ENCODE measurements at regions of chr1 and their contacts with region 1.

Region 1: DNA sequence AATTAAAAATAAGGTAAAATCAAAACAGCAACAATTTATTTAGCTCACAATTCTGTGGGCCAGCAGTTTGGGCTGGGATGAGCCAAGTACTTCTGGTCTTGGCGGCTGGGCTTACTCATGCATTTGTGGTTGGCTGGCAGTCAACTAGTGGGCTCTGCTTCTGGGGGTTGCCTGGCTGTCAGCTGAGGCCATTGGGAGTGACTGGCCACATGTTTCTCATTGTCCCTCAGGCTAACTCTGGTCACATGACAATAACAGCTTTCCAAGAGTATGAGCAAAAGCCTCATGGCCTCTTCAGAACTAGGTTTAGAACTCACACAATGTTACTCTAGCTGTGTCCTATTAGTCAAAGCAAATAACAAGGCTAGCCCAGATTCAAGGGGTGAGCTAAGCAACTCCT is 15.6 kb upstream of the CHIA start:
- DNase-seq: peak; percentile 63
- ATAC-seq: peak; percentile 74
- H3K4me3 Mint-ChIP-seq: no peak overlapping the region
- H3K27ac Mint-ChIP-seq: peak overlapping the region; percentile 51
- H3K4me1 Mint-ChIP-seq: peaks cover 39% of the 10 kb centered on the region
- H3K27me3 Mint-ChIP-seq: peaks cover 25% of the 10 kb centered on the region

Region 2: DNA sequence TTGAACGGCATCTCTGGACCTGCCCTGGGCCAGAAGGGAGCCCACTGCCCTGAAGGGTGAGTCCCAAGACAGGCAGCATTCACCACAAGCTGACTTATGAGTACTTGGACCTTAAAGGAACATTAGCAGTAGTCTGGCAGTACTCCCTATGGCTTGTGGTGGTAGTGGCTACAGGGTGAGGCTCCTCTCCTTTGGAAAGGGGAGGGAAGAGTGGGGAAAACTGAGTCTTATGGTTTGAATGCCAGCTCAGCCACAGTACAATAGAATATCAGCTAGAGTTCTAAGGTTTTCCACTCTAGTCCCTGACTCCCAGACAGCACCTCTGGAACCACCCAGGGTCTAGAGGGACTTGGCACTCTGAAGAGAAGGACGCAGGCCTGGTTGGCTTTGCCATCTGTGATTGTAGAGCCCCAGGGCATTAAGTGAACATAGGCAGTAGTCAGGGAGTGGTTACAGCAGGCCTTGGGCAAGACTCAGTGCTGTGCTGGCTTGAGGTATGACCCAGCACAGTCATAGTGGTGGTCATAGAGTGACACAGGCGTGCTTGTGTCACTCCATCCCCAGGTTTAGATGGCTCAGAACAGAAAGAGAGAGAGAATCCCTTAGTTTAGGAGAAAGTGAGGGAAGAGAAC is 371.1 kb before region 1 on chr1:
- CTCF ChIA-PET with region 1: no interaction called
- POLR2A ChIA-PET with region 1: no interaction called
- intact Hi-C with region 1: no loop called
- DNase-seq: peak; percentile 23
- ATAC-seq: peak; percentile 59
- H3K4me3 Mint-ChIP-seq: no peak overlapping the region
- H3K27ac Mint-ChIP-seq: no peak overlapping the region
- H3K4me1 Mint-ChIP-seq: peaks cover 10% of the 10 kb centered on the region
- H3K27me3 Mint-ChIP-seq: no peaks in the 10 kb centered on the region

Region 3: DNA sequence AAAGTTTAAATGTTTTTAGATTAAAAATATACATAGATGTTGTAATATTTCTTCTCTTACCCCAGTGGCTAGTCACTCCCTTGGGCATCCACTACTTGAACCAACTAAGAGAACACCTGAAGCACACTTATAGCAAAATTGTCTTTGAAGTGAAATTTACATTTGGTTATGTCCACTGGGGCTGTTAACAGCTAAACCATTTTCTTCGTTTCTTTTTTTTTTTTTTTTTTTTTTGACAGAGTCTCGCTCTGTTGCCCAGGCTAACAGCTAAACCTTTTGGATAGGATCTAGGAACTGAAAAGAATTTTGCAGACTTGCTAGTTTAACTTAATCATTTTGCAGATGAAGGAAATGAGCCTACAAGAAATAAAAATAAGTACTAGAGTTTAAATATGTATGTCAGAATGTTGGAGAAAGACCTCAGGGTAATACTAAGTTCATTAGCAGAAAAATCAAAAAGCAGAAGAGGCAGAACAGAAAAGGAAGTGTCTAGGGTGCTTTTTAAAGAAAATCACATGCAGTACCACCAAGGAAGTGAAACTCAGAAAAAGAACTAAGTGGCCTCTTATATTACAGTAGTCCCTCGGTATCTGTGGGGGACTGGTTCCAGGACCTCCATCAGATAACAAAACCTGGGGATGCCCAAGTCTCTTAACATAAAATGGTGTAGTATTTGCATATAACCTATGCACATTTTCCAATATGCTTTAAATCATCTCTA is 147.0 kb before region 1 on chr1:
- CTCF ChIA-PET with region 1: no interaction called
- POLR2A ChIA-PET with region 1: no interaction called
- intact Hi-C with region 1: no loop called
- DNase-seq: no peak
- ATAC-seq: no peak
- H3K4me3 Mint-ChIP-seq: no peak overlapping the region
- H3K27ac Mint-ChIP-seq: peak overlapping the region; percentile 10
- H3K4me1 Mint-ChIP-seq: peaks cover 27% of the 10 kb centered on the region
- H3K27me3 Mint-ChIP-seq: no peaks in the 10 kb centered on the region

Region 4: GRCh38 chr1:111176678-111177077 is 98.4 kb before region 1 on chr1:
- CTCF ChIA-PET with region 1: no interaction called
- POLR2A ChIA-PET with region 1: no interaction called
- intact Hi-C with region 1: no loop called
- DNase-seq: no peak
- ATAC-seq: no peak
- H3K4me3 Mint-ChIP-seq: no peak overlapping the region
- H3K27ac Mint-ChIP-seq: no peak overlapping the region
- H3K4me1 Mint-ChIP-seq: peaks cover 48% of the 10 kb centered on the region
- H3K27me3 Mint-ChIP-seq: no peaks in the 10 kb centered on the region

Region 5: GRCh38 chr1:111227851-111228747 is 47.0 kb before region 1 on chr1:
- CTCF ChIA-PET with region 1: interaction called, 4 read pairs
- POLR2A ChIA-PET with region 1: no interaction called
- intact Hi-C with region 1: loop called (anchors 2 kb)
- DNase-seq: no peak
- ATAC-seq: peak; percentile 55
- H3K4me3 Mint-ChIP-seq: no peak overlapping the region
- H3K27ac Mint-ChIP-seq: peak overlapping the region; percentile 30
- H3K4me1 Mint-ChIP-seq: peaks cover 86% of the 10 kb centered on the region
- H3K27me3 Mint-ChIP-seq: no peaks in the 10 kb centered on the region

Measured in activated CD4-positive, alpha-beta T cell treated with anti-CD3 and anti-CD28 coated beads for 36 hours (primary cell).